Activated CD4-positive, alpha-beta memory T cell treated with anti-CD3 and anti-CD28 coated beads for 36 hours (primary cell): ENCODE measurements at regions of chr1 and their contacts with region 1.

Region 1: GRCh38 chr1:30801771-30802198 is 44.2 kb upstream of the LAPTM5 start:
- DNase-seq: peak; percentile 85
- H3K4me3 Mint-ChIP-seq: no peak overlapping the region
- H3K27ac Mint-ChIP-seq: no peak overlapping the region
- H3K4me1 Mint-ChIP-seq: peaks cover 4% of the 10 kb centered on the region
- H3K27me3 Mint-ChIP-seq: peaks cover 32% of the 10 kb centered on the region

Region 2: GRCh38 chr1:30043731-30044408 is 757.9 kb before region 1 on chr1:
- CTCF ChIA-PET with region 1: no interaction called
- POLR2A ChIA-PET with region 1: no interaction called
- intact Hi-C with region 1: no loop called
- DNase-seq: no peak
- H3K4me3 Mint-ChIP-seq: no peak overlapping the region
- H3K27ac Mint-ChIP-seq: no peak overlapping the region
- H3K4me1 Mint-ChIP-seq: no peaks in the 10 kb centered on the region
- H3K27me3 Mint-ChIP-seq: peaks cover 8% of the 10 kb centered on the region

Region 3: DNA sequence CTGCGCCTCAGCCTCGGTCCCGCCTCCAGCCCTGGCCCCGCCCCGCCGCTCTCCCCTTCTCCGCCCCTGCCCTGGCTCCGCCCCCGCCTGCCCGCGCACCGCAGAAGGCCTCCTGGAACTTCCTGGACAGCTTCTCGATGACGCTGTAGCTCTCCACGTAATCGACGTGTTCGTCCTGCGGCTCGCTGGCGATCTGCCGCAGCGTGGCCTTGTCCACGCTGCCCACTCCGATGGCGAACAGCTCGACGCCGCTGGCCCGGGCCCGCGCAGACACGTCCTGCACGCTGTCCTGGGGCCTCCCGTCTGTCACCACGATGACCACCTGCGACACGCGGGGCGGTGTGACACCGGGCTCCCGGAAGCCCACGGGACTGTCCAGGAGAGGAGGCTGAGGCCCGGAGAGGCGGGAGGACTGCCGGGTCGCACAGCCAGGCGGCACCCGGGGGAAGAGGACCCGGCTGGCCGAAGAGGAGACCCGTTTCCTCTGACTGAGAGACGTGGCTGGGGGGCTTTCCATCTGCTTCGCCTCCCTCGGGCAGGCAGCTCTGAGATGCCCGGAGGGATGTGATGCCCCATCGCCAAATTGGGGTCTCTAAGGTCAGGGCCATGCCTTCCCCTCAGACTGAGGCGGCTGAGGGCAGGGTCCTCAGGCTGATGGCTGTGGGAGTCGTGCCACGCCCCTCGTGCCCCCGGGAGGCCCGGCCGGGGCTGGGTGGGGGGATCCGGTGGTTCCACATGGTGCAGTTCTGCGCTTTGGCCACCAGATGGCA is 83.0 kb before region 1 on chr1:
- CTCF ChIA-PET with region 1: interaction called, 24 read pairs
- POLR2A ChIA-PET with region 1: no interaction called
- intact Hi-C with region 1: no loop called
- DNase-seq: peak; percentile 88
- H3K4me3 Mint-ChIP-seq: peak overlapping the region; percentile 84
- H3K27ac Mint-ChIP-seq: peak overlapping the region; percentile 93
- H3K4me1 Mint-ChIP-seq: peaks cover 26% of the 10 kb centered on the region
- H3K27me3 Mint-ChIP-seq: no peaks in the 10 kb centered on the region

Region 4: DNA sequence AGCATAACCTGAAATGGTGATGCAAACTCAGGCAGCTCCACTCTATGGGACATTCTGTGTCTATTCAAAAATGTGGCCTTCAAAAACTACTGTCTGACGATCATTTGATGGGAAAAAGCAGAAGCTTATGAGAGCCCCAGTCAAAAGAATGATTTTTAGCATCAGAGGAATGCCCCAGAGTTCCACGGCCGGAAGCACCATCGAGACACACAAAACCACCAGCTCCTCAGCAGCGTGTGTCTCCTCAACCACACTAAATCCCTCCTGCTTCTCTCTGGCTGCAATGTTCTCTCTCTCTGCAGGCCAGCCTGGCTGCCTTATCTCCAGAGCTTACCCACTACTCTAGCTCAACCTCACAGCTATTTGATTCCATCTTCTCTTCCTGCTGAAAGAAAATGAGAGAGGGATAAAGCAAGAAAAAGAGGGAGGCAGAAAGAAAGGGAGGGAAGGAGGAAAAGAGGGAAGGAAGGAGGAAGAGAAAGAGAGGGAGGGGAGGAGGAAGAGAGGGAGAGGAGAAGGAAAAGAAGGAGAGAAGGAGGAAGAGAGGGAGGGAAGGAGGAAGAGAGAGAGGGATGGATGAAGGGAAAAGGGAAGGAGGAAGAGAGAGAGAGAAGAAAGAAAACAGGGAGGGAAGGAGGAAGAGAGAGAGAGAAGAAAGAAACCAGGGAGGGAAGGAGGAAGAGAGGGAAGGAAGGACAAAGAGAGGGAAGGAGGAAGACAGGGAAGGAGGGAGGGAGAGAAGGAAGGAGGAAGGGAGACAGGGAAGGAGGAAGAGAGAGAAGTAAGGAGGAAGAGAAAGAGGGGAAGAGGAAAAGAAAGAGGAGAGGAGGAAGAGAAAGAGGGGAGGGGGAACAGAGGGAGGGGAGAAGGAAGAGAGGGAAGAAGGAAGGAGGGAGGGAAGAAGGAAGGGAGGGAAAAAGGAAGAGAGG is 10.7 kb before region 1 on chr1:
- CTCF ChIA-PET with region 1: interaction called, 20 read pairs
- POLR2A ChIA-PET with region 1: interaction called, 3 read pairs
- intact Hi-C with region 1: no loop called
- DNase-seq: peak; percentile 28
- H3K4me3 Mint-ChIP-seq: no peak overlapping the region
- H3K27ac Mint-ChIP-seq: no peak overlapping the region
- H3K4me1 Mint-ChIP-seq: peaks cover 8% of the 10 kb centered on the region
- H3K27me3 Mint-ChIP-seq: peaks cover 14% of the 10 kb centered on the region

Region 5: GRCh38 chr1:30895944-30896660 is 94.3 kb after region 1 on chr1:
- CTCF ChIA-PET with region 1: interaction called, 12 read pairs
- POLR2A ChIA-PET with region 1: no interaction called
- intact Hi-C with region 1: no loop called
- DNase-seq: no peak
- H3K4me3 Mint-ChIP-seq: no peak overlapping the region
- H3K27ac Mint-ChIP-seq: no peak overlapping the region
- H3K4me1 Mint-ChIP-seq: no peaks in the 10 kb centered on the region
- H3K27me3 Mint-ChIP-seq: peaks cover 2% of the 10 kb centered on the region

Region 6: GRCh38 chr1:30911046-30911954 is 109.5 kb after region 1 on chr1:
- CTCF ChIA-PET with region 1: interaction called, 227 read pairs
- POLR2A ChIA-PET with region 1: interaction called, 3 read pairs
- intact Hi-C with region 1: loop called (anchors 1 kb)
- DNase-seq: peak; percentile 74
- H3K4me3 Mint-ChIP-seq: no peak overlapping the region
- H3K27ac Mint-ChIP-seq: no peak overlapping the region
- H3K4me1 Mint-ChIP-seq: peaks cover 8% of the 10 kb centered on the region
- H3K27me3 Mint-ChIP-seq: peaks cover 25% of the 10 kb centered on the region

Region 7: DNA sequence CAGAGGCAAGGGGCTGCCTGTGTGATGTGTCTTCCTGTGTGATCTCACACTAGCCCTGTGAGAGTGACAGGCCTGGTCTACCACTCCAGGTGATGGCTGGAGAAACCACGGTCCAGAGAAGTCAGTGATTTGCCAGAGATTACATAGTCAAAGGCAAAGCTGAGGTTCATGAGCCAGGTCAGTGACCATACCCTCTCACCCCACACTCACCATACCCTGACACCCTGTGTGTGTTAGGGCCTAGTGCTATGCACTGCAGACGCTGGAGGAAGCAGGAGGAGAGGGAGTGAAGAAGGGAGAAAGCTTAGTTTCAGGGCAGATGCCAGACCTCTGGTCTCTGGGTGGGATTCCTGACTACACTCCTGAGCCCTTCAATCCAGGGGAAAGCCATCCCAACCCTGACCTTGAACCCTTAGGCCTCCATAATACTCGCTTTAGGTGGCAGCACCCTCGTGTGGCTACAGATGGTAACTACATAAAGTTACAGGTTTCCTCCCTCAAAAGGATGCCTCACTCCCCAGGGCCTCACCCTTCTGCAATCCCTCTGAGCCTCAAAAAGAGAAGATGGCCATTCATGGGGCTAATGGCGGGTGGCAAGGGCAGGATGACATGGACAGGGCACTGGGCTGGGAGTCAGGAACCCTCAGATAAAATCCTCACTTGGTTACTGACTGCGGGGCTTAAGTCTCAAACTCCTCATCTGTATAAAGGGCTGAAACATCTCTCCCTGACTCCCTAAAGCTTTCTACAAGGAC is 127.5 kb after region 1 on chr1:
- CTCF ChIA-PET with region 1: interaction called, 122 read pairs
- POLR2A ChIA-PET with region 1: interaction called, 4 read pairs
- intact Hi-C with region 1: loop called (anchors 1 kb)
- DNase-seq: peak; percentile 60
- H3K4me3 Mint-ChIP-seq: no peak overlapping the region
- H3K27ac Mint-ChIP-seq: no peak overlapping the region
- H3K4me1 Mint-ChIP-seq: no peaks in the 10 kb centered on the region
- H3K27me3 Mint-ChIP-seq: no peaks in the 10 kb centered on the region

Region 8: DNA sequence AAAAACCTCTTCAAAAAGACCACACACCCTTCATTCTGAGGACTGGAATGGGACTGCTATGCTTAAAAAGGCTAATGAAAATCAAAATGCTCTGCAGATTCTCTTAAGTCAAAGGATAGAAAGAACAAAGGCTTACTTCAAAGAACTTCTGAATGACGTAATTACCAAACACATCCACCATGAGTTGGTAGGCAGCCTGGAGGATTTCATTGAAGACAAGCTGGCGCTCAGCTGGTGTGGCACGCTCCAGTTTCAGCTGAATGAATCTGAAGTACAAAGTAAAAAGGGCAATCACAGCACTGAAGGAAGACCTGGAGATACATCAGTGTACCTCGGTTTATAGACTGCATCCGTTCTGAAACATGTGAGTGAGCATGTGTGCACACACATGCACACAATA is 150.3 kb after region 1 on chr1:
- CTCF ChIA-PET with region 1: no interaction called
- POLR2A ChIA-PET with region 1: no interaction called
- intact Hi-C with region 1: no loop called
- DNase-seq: no peak
- H3K4me3 Mint-ChIP-seq: no peak overlapping the region
- H3K27ac Mint-ChIP-seq: peak overlapping the region; percentile 26
- H3K4me1 Mint-ChIP-seq: peaks cover 7% of the 10 kb centered on the region
- H3K27me3 Mint-ChIP-seq: no peaks in the 10 kb centered on the region